ENCODE measurements at regions of chr11 and their contacts with region 1.

Region 1: DNA sequence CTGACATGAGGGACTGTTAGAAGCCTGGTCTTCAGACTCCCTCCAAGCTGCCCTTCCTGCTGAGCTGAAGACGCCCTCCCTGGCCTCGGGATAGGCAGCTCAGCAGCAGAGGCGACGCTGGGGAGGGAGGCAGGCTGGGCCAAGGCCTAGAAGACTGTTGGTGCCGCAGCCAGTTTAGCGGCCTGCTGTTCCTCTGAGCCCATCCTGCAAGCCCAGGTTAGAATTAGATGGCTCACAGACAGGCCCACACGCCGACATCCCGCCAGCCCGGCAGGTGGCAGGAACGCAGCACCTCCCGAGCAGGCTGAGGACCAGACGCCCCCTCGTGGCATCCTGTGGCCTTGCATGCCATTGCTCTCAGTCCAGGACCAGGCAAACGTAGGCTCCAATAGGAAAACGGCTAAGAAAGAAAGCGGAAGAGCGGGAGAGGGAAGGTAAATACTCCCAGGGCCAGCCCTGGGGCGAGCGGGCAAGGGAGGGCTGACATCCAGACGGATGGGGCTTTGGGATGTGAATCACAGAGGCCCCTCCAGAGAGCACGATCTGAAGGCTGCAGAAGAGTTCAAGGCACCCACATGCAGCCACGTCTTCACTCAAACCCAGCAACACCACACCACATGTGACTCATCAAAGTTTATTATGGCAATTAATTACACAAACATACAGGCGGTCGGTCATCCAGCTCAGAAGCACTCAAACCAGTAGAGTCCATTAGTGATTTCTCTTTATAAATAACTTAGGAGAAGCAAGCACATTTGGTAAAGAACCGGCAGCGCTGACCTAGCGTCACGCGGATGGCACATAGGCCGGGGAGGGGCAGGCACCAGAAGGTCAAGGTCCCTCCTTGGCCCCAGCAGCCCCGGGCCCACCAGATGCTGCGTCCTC is 27.6 kb downstream of the CD5 start:
- DNase-seq: peak; percentile 95
- ATAC-seq: peak; percentile 92
- H3K4me3 Mint-ChIP-seq: peak overlapping the region; percentile 29
- H3K27ac Mint-ChIP-seq: peak overlapping the region; percentile 11
- H3K4me1 Mint-ChIP-seq: peaks cover 15% of the 10 kb centered on the region
- H3K27me3 Mint-ChIP-seq: no peaks in the 10 kb centered on the region
- CTCF ChIP-seq: peak; percentile 100

Region 2: GRCh38 chr11:60791153-60791933 is 338.5 kb before region 1 on chr11:
- CTCF ChIA-PET with region 1: no interaction called
- POLR2A ChIA-PET with region 1: no interaction called
- intact Hi-C with region 1: no loop called
- DNase-seq: no peak
- ATAC-seq: no peak
- H3K4me3 Mint-ChIP-seq: no peak overlapping the region
- H3K27ac Mint-ChIP-seq: no peak overlapping the region
- H3K4me1 Mint-ChIP-seq: no peaks in the 10 kb centered on the region
- H3K27me3 Mint-ChIP-seq: no peaks in the 10 kb centered on the region
- CTCF ChIP-seq: no peak

Region 3: DNA sequence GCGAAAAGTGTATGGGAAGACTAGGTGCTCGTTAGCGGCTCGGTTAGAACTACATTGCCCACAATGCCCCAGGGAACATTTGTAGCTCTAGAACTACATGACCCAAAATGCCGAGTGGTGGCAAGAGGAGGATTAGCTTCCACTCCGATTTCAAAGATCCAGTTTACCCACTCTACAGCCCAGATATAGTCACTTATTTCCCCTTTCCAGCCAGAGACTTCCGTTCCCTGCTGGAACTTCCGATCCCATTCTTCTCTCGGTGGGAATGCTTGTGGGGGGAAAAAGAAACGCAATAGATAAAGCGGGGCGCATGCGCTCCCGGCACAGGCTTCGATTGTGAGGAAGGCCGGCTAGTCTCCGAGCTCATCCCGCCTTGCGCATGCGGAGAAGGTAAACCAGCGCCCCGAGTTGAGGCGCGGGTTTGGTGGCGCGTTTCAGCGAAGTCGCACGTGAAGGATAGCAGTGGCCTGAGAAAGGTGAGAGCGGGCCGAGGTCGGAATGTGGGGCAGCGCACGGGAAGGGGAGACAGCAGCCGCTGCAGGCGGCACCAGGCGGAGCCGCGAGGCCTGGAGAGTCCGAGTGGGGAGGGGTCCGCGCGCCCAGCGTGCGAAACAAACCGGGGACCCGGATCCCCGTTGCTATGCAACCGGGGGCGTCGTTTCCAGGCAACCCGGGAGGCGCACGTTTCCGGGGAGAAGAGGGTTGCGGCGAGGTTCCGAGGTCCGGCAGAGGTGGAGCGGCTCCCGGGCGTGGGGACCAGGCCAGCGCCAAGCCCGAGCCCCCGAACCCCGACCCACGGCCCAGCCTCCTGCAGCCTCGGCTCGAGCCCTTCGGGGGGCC is 215.9 kb before region 1 on chr11 and contains the start of gene TMEM109:
- CTCF ChIA-PET with region 1: interaction called, 15 read pairs
- POLR2A ChIA-PET with region 1: no interaction called
- intact Hi-C with region 1: no loop called
- DNase-seq: peak; percentile 91
- ATAC-seq: peak; percentile 72
- H3K4me3 Mint-ChIP-seq: peak within 1 kb of the TSS; percentile 90
- H3K27ac Mint-ChIP-seq: peak within 1 kb of the TSS; percentile 97
- H3K4me1 Mint-ChIP-seq: peaks cover 71% of the 10 kb centered on the region
- H3K27me3 Mint-ChIP-seq: no peaks in the 10 kb centered on the region
- CTCF ChIP-seq: no peak
- total RNA-seq, gene TMEM109: 93.2 to 101 TPM

Region 4: DNA sequence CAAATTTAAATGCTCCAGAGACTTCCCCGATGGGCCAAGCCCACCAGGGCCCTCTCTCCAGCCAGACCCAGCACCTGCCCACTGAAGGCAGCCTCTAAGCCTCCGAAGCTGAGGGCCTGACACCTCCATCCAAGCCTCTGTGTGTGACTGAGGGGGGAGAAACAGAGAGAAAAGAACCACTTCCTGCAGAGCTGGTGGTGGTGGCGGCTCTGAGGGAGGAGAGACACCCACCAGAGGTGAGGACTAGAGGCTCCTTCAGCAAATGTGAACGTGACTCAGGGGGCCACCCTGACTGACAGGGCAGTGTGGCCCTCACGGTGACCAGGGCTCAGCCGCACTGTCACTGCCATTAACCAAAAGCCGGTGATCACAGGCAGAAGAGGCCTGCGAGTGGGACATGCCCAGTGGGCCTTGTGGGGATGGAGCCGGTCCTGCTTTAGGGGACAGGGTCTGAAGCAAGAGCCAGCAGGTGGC is 58.6 kb before region 1 on chr11:
- CTCF ChIA-PET with region 1: interaction called, 11 read pairs
- POLR2A ChIA-PET with region 1: no interaction called
- intact Hi-C with region 1: no loop called
- DNase-seq: peak; percentile 87
- ATAC-seq: peak; percentile 95
- H3K4me3 Mint-ChIP-seq: peak overlapping the region; percentile 47
- H3K27ac Mint-ChIP-seq: peak overlapping the region; percentile 93
- H3K4me1 Mint-ChIP-seq: peaks cover 87% of the 10 kb centered on the region
- H3K27me3 Mint-ChIP-seq: no peaks in the 10 kb centered on the region
- CTCF ChIP-seq: no peak

Region 5: GRCh38 chr11:61141601-61142028 is 11.7 kb after region 1 on chr11:
- CTCF ChIA-PET with region 1: interaction called, 22 read pairs
- POLR2A ChIA-PET with region 1: interaction called, 4 read pairs
- intact Hi-C with region 1: no loop called
- DNase-seq: no peak
- ATAC-seq: no peak
- H3K4me3 Mint-ChIP-seq: no peak overlapping the region
- H3K27ac Mint-ChIP-seq: no peak overlapping the region
- H3K4me1 Mint-ChIP-seq: peaks cover 12% of the 10 kb centered on the region
- H3K27me3 Mint-ChIP-seq: no peaks in the 10 kb centered on the region
- CTCF ChIP-seq: no peak

Region 6: DNA sequence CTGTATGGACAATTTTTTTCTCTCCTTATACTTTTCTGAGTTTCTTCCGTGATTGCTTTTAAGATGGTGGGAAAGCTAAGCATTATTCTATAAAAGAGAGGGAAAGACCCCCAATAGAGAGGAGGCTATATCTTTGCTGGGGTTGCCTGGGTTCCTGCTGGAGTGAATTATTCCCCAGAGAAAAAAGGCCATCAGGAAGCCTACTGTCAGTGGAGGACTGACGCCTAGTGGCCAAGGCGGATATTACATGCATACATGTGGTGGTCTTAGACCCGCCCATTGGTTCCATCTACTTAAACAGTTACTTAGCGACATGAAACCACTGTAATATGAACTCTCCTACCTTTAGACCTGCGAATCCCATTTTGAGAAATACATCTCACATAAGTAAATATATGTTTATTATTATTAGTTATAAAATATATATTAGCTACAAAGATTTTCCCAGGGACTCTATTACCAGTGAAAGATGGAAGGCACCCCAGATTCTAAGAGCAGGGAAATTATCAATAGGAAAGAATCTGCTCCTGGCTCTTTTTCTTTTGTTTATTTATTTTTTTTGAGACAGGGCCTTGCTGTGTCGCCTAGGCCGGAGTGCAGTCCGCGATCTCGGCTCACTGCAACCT is 57.7 kb after region 1 on chr11:
- CTCF ChIA-PET with region 1: interaction called, 34 read pairs
- POLR2A ChIA-PET with region 1: no interaction called
- intact Hi-C with region 1: loop called (anchors 10 kb)
- DNase-seq: peak; percentile 95
- ATAC-seq: peak; percentile 100
- H3K4me3 Mint-ChIP-seq: no peak overlapping the region
- H3K27ac Mint-ChIP-seq: no peak overlapping the region
- H3K4me1 Mint-ChIP-seq: peaks cover 3% of the 10 kb centered on the region
- H3K27me3 Mint-ChIP-seq: no peaks in the 10 kb centered on the region
- CTCF ChIP-seq: peak; percentile 98

Region 7: DNA sequence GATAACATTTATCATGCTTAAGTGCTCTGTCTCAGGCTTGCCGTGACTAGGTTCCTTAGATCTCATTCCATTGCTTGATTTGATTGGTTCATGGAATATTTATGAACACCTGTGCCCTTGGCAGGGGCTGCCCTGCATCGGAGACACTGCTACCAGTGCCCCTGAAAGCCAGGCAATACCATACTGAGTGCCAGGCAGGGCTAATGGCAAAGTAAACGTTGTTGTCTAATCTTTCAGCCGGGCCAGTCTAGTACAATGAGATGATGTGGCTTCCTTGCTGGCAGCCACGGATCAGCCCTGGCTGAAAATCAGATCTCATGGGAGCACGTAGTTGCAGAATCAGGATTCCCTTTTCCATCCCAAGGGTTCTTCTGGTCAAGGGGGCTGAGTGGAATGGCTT is 68.5 kb after region 1 on chr11:
- CTCF ChIA-PET with region 1: no interaction called
- POLR2A ChIA-PET with region 1: no interaction called
- intact Hi-C with region 1: no loop called
- DNase-seq: no peak
- ATAC-seq: no peak
- H3K4me3 Mint-ChIP-seq: no peak overlapping the region
- H3K27ac Mint-ChIP-seq: no peak overlapping the region
- H3K4me1 Mint-ChIP-seq: no peaks in the 10 kb centered on the region
- H3K27me3 Mint-ChIP-seq: peaks cover 14% of the 10 kb centered on the region
- CTCF ChIP-seq: no peak